ENCODE measurements at regions of chr11 and their contacts with region 1.

Region 1: GRCh38 chr11:108302121-108302785 is 79.4 kb downstream of the ATM start:
- DNase-seq: no peak
- ATAC-seq: no peak
- H3K4me3 ChIP-seq: no peak overlapping the region
- H3K4me3 Mint-ChIP-seq: no peak overlapping the region
- H3K27ac ChIP-seq: no peak overlapping the region
- H3K27ac Mint-ChIP-seq: peak overlapping the region in 8 of 9 donors; percentile 36 to 82 (median 67)
- H3K4me1 ChIP-seq: no peaks in the 10 kb centered on the region
- H3K4me1 Mint-ChIP-seq: peaks cover 0 to 63% (median 38%) of the 10 kb centered on the region in 7 donors
- H3K27me3 ChIP-seq: no peaks in the 10 kb centered on the region
- H3K27me3 Mint-ChIP-seq: no peaks in the 10 kb centered on the region

Region 2: GRCh38 chr11:108333403-108333899 is 31.2 kb after region 1 on chr11:
- CTCF ChIA-PET with region 1: interaction called, 3 read pairs
- POLR2A ChIA-PET with region 1: no interaction called
- intact Hi-C with region 1: loop called in 1 of 2 experiments (anchors 2 kb)
- DNase-seq: no peak
- ATAC-seq: no peak
- H3K4me3 ChIP-seq: no peak overlapping the region
- H3K4me3 Mint-ChIP-seq: no peak overlapping the region
- H3K27ac ChIP-seq: peak overlapping the region; percentile 14
- H3K27ac Mint-ChIP-seq: peak overlapping the region in 2 of 9 donors; percentile 2 to 38
- H3K4me1 ChIP-seq: no peaks in the 10 kb centered on the region
- H3K4me1 Mint-ChIP-seq: peaks cover 0 to 32% (median 14%) of the 10 kb centered on the region in 7 donors
- H3K27me3 ChIP-seq: no peaks in the 10 kb centered on the region
- H3K27me3 Mint-ChIP-seq: no peaks in the 10 kb centered on the region

Region 3: DNA sequence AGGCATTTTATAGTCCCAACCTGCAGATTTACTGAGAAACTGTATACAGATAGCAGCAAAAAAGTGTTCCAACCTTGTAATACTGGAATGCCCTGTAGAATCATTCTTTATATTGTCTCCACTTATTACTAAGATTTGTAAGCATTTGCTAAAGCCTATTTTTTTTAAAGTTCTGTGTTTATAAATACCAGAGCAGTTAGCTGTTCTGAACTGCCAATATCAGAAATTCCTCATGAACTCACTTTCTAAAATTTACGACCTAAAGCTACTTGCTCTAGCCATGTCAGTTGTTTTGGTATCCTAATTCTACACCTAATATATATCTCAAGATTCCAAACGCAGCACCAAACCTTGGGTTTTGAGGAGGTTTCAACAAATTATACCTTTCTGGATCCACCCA is 61.9 kb after region 1 on chr11:
- CTCF ChIA-PET with region 1: no interaction called
- POLR2A ChIA-PET with region 1: no interaction called
- intact Hi-C with region 1: no loop called
- DNase-seq: no peak
- ATAC-seq: no peak
- H3K4me3 ChIP-seq: no peak overlapping the region
- H3K4me3 Mint-ChIP-seq: no peak overlapping the region
- H3K27ac ChIP-seq: no peak overlapping the region
- H3K27ac Mint-ChIP-seq: peak overlapping the region in 2 of 9 donors; percentile 3 to 32
- H3K4me1 ChIP-seq: no peaks in the 10 kb centered on the region
- H3K4me1 Mint-ChIP-seq: peaks cover 0 to 9% (median 0%) of the 10 kb centered on the region in 7 donors
- H3K27me3 ChIP-seq: no peaks in the 10 kb centered on the region
- H3K27me3 Mint-ChIP-seq: no peaks in the 10 kb centered on the region

Region 4: GRCh38 chr11:108647701-108648527 is 345.7 kb after region 1 on chr11:
- CTCF ChIA-PET with region 1: no interaction called
- POLR2A ChIA-PET with region 1: no interaction called
- intact Hi-C with region 1: no loop called
- DNase-seq: peak; percentile 17 to 70 (median 62)
- ATAC-seq: peak; percentile 91
- H3K4me3 ChIP-seq: no peak overlapping the region
- H3K4me3 Mint-ChIP-seq: no peak overlapping the region
- H3K27ac ChIP-seq: no peak overlapping the region
- H3K27ac Mint-ChIP-seq: no peak overlapping the region
- H3K4me1 ChIP-seq: no peaks in the 10 kb centered on the region
- H3K4me1 Mint-ChIP-seq: no peaks in the 10 kb centered on the region
- H3K27me3 ChIP-seq: no peaks in the 10 kb centered on the region
- H3K27me3 Mint-ChIP-seq: peaks cover 0 to 9% (median 0%) of the 10 kb centered on the region in 5 donors

Measured in naive thymus-derived CD4-positive, alpha-beta T cell (primary cell).